ENCODE measurements at regions of chr20 and their contacts with region 1.

Region 1: DNA sequence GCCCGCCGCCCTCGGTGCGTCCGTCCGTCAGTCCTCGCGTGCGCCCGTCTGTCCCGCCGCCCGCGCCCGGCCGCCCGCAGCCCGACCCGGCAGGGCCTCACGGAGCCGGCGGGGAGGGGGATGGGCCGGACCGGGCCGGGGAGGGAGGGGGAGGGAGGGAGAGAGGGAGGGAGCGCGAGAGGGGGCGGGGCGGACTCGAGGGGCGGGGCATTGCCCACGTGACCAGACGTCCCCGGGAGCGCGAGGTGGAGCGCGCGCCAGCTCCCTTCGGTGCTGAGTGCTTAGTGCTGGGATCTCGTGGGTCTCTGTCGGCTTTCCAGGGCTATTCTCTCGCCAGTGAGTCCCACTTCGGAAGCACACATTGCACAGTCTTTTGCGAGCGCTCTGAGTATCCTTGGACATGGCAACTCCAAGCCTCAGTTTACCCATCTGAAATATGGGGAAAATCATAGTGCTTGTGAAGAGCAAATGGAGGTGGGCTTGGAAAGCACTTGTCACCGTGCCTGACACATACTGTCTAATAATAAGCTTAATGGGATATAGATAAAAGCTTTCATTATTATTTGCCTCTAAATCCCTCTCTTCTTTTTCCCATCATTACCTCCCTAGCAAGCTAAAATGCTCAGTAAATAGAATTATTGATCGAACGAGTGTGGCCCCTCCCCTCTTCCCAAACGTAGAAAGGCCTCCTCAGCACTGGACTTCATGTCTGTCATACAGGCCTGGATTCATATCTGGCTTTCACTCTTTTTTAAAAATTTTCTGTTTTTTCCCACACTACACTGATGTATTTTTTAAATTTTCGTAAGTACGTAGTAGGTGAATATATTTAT is at the start of gene NCOA6:
- DNase-seq: peak; percentile 56 to 86 (median 74)
- ATAC-seq: peak; percentile 90
- H3K4me3 ChIP-seq: peak within 1 kb of the TSS; percentile 78
- H3K4me3 Mint-ChIP-seq: peak within 1 kb of the TSS; percentile 83 to 100 (median 98)
- H3K27ac ChIP-seq: peak within 1 kb of the TSS; percentile 76
- H3K27ac Mint-ChIP-seq: peak within 1 kb of the TSS; percentile 85 to 95 (median 91)
- H3K4me1 ChIP-seq: peaks cover 16 to 17% of the 10 kb centered on the region in 2 donors
- H3K4me1 Mint-ChIP-seq: peaks cover 30 to 50% (median 43%) of the 10 kb centered on the region in 7 donors
- H3K27me3 ChIP-seq: no peaks in the 10 kb centered on the region
- H3K27me3 Mint-ChIP-seq: peaks cover 0 to 17% (median 0%) of the 10 kb centered on the region in 5 donors
- total RNA-seq, gene NCOA6: 23.6 to 31.9 (median 29.3) TPM

Region 2: DNA sequence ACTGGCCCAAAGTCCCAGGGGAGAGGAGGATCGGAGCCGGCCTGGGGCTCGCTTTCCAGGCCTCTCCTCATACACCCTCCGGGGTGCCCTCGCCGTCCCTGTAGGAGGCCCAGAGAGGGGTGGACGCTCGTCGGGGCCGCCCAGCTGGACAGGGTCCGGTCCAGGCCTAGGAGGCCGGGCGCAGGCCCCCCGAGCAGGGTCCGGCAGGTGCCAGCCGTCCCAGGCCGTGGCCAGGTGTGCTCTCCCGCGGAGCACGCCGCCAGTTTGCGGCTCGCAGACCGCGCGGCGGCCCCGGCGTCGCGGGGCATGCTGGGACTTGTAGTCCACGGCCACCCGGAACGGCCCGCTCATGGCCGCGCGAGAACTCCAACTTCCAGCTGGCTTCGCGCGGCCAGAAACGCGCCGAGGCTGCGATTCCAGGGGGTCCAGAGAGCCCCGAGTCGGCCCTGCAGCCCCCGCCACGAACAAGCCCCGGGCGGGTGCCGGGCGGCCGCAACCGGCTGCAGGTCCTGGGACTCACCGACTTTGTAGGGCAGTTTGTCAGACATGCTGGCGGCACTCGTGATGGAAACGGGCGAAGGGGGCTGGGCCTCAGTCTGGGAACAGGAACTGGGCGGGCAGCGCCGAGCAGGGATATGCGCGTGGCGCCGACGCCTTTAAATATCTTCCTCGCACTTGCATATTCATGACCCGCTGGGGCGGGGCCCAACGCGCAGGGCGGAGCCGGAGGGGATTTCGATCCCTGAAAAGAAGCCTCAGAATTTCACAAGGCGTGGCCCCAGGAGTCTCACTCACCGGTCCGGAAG is 522.8 kb before region 1 on chr20 and contains the start of gene AHCY:
- CTCF ChIA-PET with region 1: no interaction called
- POLR2A ChIA-PET with region 1: no interaction called
- intact Hi-C with region 1: loop called (anchors 1 to 2 kb)
- DNase-seq: peak; percentile 84 to 95 (median 92)
- ATAC-seq: peak; percentile 96
- H3K4me3 ChIP-seq: peak within 1 kb of the TSS; percentile 91
- H3K4me3 Mint-ChIP-seq: peak within 1 kb of the TSS; percentile 90 to 96 (median 91)
- H3K27ac ChIP-seq: peak within 1 kb of the TSS; percentile 87
- H3K27ac Mint-ChIP-seq: peak within 1 kb of the TSS; percentile 89 to 95 (median 93)
- H3K4me1 ChIP-seq: peaks cover 3 to 6% of the 10 kb centered on the region in 2 donors
- H3K4me1 Mint-ChIP-seq: peaks cover 0 to 27% (median 14%) of the 10 kb centered on the region in 7 donors
- H3K27me3 ChIP-seq: no peaks in the 10 kb centered on the region
- H3K27me3 Mint-ChIP-seq: peaks cover 0 to 2% (median 0%) of the 10 kb centered on the region in 5 donors
- total RNA-seq, gene AHCY: 19.1 to 62.9 (median 23.7) TPM

Region 3: DNA sequence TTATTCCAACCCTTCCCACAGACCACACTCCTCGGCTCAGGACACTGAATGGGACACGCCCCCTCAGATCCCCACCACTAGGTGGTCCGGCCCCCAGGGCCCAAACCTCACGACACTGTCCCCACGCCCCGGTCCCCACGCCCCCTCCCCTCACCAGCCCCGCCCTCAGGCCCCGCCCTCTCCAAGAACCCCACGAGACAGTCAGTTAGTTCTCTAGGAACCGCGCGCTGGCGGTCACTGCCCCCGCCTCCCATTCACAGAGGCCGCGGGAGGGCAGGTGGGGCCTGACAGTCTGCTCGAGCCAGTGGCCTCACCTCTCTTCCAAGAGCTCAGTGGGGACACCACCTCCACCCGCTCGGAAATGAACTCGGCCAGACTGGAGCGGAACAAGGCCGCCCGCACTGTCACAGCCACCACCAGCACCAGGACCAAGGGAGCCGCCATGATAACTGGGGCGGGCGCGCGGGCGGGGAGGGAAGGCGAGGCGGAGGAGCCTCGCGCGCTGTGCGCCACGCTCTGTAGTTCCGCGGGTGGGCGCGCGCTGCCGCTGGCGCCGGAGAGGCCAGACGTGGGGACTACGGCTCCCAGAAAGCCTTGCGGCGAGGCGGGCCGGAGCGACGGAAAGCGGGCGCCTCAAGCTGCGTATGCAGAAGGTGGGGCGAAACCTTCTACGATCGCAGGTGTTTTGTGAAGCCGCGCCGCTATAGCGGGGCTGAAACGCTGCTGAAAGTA is 148.9 kb before region 1 on chr20 and contains the start of gene PIGU:
- CTCF ChIA-PET with region 1: no interaction called
- POLR2A ChIA-PET with region 1: no interaction called
- intact Hi-C with region 1: loop called in 1 of 2 experiments (anchors 10 kb)
- DNase-seq: peak; percentile 88 to 97 (median 96)
- ATAC-seq: peak; percentile 99
- H3K4me3 ChIP-seq: peak within 1 kb of the TSS; percentile 63
- H3K4me3 Mint-ChIP-seq: peak within 1 kb of the TSS; percentile 95 to 99 (median 96)
- H3K27ac ChIP-seq: peak within 1 kb of the TSS; percentile 95
- H3K27ac Mint-ChIP-seq: peak within 1 kb of the TSS; percentile 85 to 98 (median 97)
- H3K4me1 ChIP-seq: peaks cover 4 to 5% of the 10 kb centered on the region in 2 donors
- H3K4me1 Mint-ChIP-seq: peaks cover 14 to 37% (median 24%) of the 10 kb centered on the region in 7 donors
- H3K27me3 ChIP-seq: no peaks in the 10 kb centered on the region
- H3K27me3 Mint-ChIP-seq: no peaks in the 10 kb centered on the region
- total RNA-seq, gene PIGU: 8.6 to 21.3 (median 16.1) TPM

Region 4: DNA sequence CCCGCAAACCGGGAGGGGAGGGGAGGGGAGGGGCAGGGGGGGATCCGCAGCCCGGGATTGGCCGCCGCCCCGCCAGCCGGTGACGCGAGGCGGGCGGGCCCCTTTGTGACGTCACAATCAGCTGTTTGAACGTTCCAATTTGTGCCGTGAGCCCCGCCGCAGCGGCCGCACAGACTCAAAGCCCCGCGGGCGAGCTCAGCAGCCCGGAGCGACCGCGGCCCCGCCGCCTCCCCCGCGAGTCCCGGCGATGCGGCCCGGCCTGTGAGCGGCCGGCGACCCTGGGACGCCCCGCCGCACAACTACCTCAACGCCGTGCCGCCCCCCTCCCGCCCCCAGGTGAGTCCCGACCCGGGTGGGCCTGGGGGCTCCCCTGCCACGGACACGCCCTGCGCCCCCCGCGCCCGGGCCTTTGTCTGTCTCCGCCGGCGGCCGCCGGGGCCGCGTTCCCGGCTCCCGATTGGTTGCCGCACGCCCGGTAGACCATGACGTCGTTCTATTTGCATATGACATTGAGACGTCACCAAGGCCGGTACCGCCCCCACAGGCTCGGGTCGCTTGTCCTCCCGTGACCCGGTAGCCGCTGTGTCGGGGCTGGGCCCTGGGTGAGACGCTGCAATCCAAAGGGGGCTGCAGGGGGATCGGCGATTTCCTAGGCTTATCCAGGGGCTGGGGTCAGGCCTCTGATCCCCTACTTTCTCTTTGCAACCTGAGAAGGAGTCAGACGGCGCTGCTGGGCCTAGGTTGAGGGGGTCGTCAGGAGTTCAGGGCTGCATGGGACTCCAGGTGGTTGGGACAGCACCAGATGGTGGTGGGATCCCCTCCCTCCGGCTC is 121.4 kb before region 1 on chr20 and contains the start of gene TP53INP2:
- CTCF ChIA-PET with region 1: no interaction called
- POLR2A ChIA-PET with region 1: no interaction called
- intact Hi-C with region 1: loop called (anchors 10 kb)
- DNase-seq: peak; percentile 82 to 93 (median 87)
- ATAC-seq: peak; percentile 78
- H3K4me3 ChIP-seq: peak within 1 kb of the TSS; percentile 59
- H3K4me3 Mint-ChIP-seq: peak within 1 kb of the TSS; percentile 91 to 98 (median 94)
- H3K27ac ChIP-seq: peak within 1 kb of the TSS; percentile 94
- H3K27ac Mint-ChIP-seq: peak within 1 kb of the TSS; percentile 79 to 100 (median 97)
- H3K4me1 ChIP-seq: peaks cover 6 to 7% of the 10 kb centered on the region in 2 donors
- H3K4me1 Mint-ChIP-seq: peaks cover 15 to 39% (median 25%) of the 10 kb centered on the region in 7 donors
- H3K27me3 ChIP-seq: no peaks in the 10 kb centered on the region
- H3K27me3 Mint-ChIP-seq: peaks cover 0 to 25% (median 6%) of the 10 kb centered on the region in 5 donors
- total RNA-seq, gene TP53INP2: 1.2 to 41.4 (median 1.5) TPM

Region 5: DNA sequence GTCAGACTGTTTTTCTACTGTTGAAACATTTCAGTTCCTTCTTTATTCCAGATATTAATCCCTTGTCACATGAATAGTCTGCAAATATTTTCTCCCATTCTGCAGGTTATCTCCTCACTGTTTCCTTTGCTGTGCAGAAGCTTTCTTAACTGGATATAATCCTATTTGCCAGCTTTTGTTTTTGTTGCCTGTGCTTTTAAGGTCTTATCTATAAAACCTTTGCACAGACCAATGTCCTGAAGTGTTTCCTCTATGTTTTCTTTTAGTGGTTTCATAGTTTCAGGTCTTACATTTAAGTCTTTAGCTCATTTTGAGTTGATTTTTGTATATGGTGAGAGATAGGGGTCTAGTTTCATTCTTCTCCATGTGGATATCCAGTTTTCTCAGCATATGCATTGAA is 19.5 kb before region 1 on chr20:
- CTCF ChIA-PET with region 1: no interaction called
- POLR2A ChIA-PET with region 1: no interaction called
- intact Hi-C with region 1: no loop called
- DNase-seq: no peak
- ATAC-seq: no peak
- H3K4me3 ChIP-seq: no peak overlapping the region
- H3K4me3 Mint-ChIP-seq: no peak overlapping the region
- H3K27ac ChIP-seq: no peak overlapping the region
- H3K27ac Mint-ChIP-seq: peak overlapping the region in 1 of 9 donors; percentile 68
- H3K4me1 ChIP-seq: no peaks in the 10 kb centered on the region
- H3K4me1 Mint-ChIP-seq: peaks cover 13 to 40% (median 29%) of the 10 kb centered on the region in 7 donors
- H3K27me3 ChIP-seq: no peaks in the 10 kb centered on the region
- H3K27me3 Mint-ChIP-seq: no peaks in the 10 kb centered on the region

Region 6: GRCh38 chr20:34955232-34956040 is 129.7 kb after region 1 on chr20 and contains the starts of genes GSS and MYH7B:
- CTCF ChIA-PET with region 1: no interaction called
- POLR2A ChIA-PET with region 1: no interaction called
- intact Hi-C with region 1: loop called (anchors 1 kb)
- DNase-seq: peak; percentile 90 to 100 (median 94)
- ATAC-seq: peak; percentile 97
- H3K4me3 ChIP-seq: peak within 1 kb of the TSS; percentile 87
- H3K4me3 Mint-ChIP-seq: peak within 1 kb of the TSS; percentile 95 to 100 (median 98)
- H3K27ac ChIP-seq: peak within 1 kb of the TSS; percentile 77
- H3K27ac Mint-ChIP-seq: peak within 1 kb of the TSS; percentile 94 to 98 (median 97)
- H3K4me1 ChIP-seq: peaks cover 5 to 11% of the 10 kb centered on the region in 2 donors
- H3K4me1 Mint-ChIP-seq: peaks cover 11 to 40% (median 34%) of the 10 kb centered on the region in 7 donors
- H3K27me3 ChIP-seq: no peaks in the 10 kb centered on the region
- H3K27me3 Mint-ChIP-seq: no peaks in the 10 kb centered on the region
- total RNA-seq, gene GSS: 25.9 to 54.4 (median 45.8) TPM
- total RNA-seq, gene MYH7B: 0.15 to 1.0 (median 0.44) TPM

Region 7: DNA sequence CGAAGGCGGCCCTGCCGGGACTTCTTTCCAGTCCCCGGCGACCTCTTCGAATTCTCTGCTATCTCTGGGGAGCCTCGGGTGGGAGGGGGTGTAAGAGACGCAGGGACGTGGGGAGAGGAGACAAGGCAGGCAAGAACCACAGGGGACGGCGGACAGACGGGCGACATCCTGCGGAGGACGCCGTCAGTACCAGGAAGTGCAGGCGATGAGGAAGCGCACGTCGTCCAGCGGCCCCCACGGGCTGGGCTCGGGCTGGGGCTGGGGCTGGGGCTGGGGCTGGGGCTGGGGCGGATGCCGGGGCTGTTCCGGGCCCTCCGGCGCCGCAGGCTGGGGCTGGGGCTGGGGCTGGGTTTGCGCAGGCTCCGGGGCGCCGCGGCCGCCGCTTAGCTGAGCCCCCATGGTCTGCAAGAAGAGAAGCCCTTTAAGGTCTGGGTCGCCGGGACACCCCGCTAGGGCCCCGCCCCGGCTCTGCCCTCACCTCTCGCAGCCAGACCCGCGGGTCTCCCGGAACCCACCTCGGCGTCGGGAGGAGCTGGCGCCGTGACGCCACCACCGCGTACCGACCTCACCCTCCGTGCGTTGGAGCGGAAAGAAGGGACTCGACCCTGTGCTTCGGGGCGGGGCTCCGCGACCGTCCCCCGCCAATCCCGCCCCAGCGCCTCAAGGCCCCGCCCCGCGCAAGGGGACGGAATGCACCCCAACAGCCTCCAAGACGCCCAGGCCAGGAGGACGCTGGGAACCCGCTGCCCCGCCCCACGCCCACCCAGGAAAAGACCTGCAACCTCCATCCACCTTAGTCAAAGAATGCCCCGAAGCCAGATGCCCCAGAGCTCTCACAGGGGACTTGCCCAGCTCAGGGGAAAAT is 452.0 kb after region 1 on chr20 and contains the start of gene MMP24OS:
- CTCF ChIA-PET with region 1: no interaction called
- POLR2A ChIA-PET with region 1: no interaction called
- intact Hi-C with region 1: loop called in 1 of 2 experiments (anchors 10 kb)
- DNase-seq: peak; percentile 77 to 90 (median 87)
- ATAC-seq: peak; percentile 95
- H3K4me3 ChIP-seq: peak within 1 kb of the TSS; percentile 99
- H3K4me3 Mint-ChIP-seq: peak within 1 kb of the TSS; percentile 84 to 97 (median 96)
- H3K27ac ChIP-seq: peak within 1 kb of the TSS; percentile 96
- H3K27ac Mint-ChIP-seq: peak within 1 kb of the TSS; percentile 95 to 99 (median 98)
- H3K4me1 ChIP-seq: peaks cover 11 to 18% of the 10 kb centered on the region in 2 donors
- H3K4me1 Mint-ChIP-seq: peaks cover 9 to 46% (median 28%) of the 10 kb centered on the region in 7 donors
- H3K27me3 ChIP-seq: no peaks in the 10 kb centered on the region
- H3K27me3 Mint-ChIP-seq: no peaks in the 10 kb centered on the region
- total RNA-seq, gene MMP24OS: 43.8 to 88.6 (median 69.4) TPM

Region 8: GRCh38 chr20:35410613-35411012 is 584.9 kb after region 1 on chr20:
- CTCF ChIA-PET with region 1: no interaction called
- POLR2A ChIA-PET with region 1: interaction called, 4 read pairs
- intact Hi-C with region 1: loop called in 1 of 2 experiments (anchors 1 kb)
- DNase-seq: no peak
- ATAC-seq: no peak
- H3K4me3 ChIP-seq: peak overlapping the region; percentile 79
- H3K4me3 Mint-ChIP-seq: peak overlapping the region; percentile 92 to 100 (median 98)
- H3K27ac ChIP-seq: no peak overlapping the region
- H3K27ac Mint-ChIP-seq: peak overlapping the region in 8 of 9 donors; percentile 48 to 100 (median 97)
- H3K4me1 ChIP-seq: peaks cover 8 to 9% of the 10 kb centered on the region in 2 donors
- H3K4me1 Mint-ChIP-seq: peaks cover 17 to 24% (median 22%) of the 10 kb centered on the region in 7 donors
- H3K27me3 ChIP-seq: no peaks in the 10 kb centered on the region
- H3K27me3 Mint-ChIP-seq: peaks cover 0 to 2% (median 0%) of the 10 kb centered on the region in 5 donors

Measured in naive thymus-derived CD4-positive, alpha-beta T cell (primary cell).